ENCODE measurements at regions of chr5 and their contacts with region 1.

Region 1: GRCh38 chr5:7856855-7857254 is 5.9 kb upstream of the CFAP90 start:
- DNase-seq: peak; percentile 27
- CTCF ChIP-seq: peak; percentile 67

Region 2: DNA sequence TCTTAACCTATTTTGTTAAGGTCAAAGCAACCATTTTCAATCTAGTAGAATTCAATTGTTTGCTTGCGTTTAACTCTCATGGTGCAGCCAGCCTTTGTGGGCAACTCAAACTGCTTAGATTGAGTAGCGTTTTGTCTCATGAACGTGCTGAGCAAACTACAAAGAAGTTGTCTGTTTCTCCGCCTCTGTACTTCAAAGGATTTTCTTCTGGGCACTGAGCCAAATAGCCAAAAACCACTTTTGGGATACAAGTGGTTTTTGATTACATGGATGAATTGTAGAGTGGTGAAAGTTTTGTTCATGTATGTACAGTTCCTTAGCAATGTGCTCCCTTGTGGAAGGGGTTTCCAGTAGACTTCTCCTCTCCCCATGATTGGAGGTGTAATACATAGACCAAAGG is 128.8 kb before region 1 on chr5:
- CTCF ChIA-PET with region 1: no interaction called
- POLR2A ChIA-PET with region 1: no interaction called
- DNase-seq: no peak
- CTCF ChIP-seq: no peak

Region 3: DNA sequence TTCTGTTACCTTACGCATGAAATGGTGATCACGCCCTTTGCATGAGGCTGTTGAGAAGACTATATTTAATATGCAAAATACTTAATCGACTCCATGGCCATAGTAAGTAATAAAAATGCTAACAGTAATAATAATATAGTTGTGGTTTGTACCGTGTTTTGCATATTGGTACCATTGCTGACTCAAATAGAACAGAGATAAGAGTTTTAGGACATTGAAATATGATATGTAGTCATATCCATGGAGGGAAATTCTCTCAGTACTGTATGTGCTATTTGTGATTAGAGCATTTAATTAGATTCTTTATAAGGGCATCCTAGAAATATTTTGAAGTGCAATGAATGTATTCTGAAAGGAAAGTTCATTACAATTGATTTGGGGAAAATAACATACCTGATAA is 47.9 kb before region 1 on chr5:
- CTCF ChIA-PET with region 1: no interaction called
- POLR2A ChIA-PET with region 1: no interaction called
- DNase-seq: no peak
- CTCF ChIP-seq: no peak

Region 4: GRCh38 chr5:7845557-7845956 is 11.3 kb before region 1 on chr5:
- CTCF ChIA-PET with region 1: interaction called, 12 read pairs
- POLR2A ChIA-PET with region 1: no interaction called
- DNase-seq: no peak
- CTCF ChIP-seq: no peak

Region 5: DNA sequence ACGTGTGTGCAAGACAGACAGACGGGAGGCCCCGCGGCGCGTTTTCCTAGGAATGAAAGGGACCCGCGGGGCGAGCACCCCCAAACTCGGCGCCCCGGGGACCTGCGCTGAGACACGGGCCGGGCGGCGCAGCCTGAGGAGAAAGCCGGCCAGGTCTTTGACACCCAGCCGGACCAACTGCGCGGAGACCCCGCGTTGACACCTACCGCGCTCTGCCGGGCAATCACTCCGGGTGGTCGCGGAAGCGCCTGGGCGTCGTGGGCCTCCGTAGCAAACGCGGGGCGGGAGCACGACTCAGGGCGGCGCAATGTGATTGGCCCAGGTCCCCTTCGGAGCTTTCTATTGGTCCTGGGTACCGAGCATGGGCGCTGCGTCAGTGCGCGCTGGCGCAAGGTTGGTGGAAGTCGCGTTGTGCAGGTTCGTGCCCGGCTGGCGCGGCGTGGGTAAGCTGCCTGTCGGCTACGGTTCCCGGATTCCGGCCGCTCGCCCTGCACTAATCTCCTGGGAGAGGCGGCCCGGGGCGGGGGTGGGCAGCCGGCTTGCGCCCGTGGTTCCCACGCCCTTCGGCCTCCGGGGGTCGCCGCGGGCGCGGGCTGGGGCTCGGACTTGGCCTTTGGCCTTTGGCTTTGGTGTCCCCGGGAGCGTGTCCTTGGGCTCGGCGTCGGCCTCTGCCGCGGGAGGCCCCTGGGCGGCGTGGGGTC is 12.1 kb after region 1 on chr5 and contains the starts of genes FASTKD3 and MTRR:
- CTCF ChIA-PET with region 1: interaction called, 12 read pairs
- POLR2A ChIA-PET with region 1: interaction called, 4 read pairs
- DNase-seq: peak; percentile 94
- CTCF ChIP-seq: no peak

Region 6: GRCh38 chr5:7878381-7878873 is 21.6 kb after region 1 on chr5:
- CTCF ChIA-PET with region 1: interaction called, 12 read pairs
- POLR2A ChIA-PET with region 1: no interaction called
- DNase-seq: peak; percentile 65
- CTCF ChIP-seq: no peak

Region 7: DNA sequence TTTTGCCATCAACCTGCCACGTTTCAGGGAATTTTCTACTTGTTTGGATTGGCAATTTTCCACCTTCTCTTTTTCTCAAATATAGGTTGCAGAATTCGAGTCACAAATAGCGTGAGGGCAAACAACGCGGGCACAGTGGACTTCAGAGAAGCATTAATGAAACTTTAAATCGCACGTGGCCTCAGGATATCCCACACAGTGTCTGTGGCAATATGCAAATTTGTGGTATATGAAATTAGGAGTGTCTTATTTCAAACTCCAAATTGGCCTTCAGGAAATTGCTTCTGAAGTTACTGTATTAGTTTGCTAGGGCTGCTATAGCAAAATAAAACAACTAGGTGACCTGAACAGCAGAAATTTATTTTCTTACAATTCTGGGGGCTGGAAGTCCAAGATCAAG is 103.3 kb after region 1 on chr5:
- CTCF ChIA-PET with region 1: no interaction called
- POLR2A ChIA-PET with region 1: no interaction called
- DNase-seq: no peak
- CTCF ChIP-seq: no peak